ENCODE measurements at regions of chr5 and their contacts with region 1.

Region 1: DNA sequence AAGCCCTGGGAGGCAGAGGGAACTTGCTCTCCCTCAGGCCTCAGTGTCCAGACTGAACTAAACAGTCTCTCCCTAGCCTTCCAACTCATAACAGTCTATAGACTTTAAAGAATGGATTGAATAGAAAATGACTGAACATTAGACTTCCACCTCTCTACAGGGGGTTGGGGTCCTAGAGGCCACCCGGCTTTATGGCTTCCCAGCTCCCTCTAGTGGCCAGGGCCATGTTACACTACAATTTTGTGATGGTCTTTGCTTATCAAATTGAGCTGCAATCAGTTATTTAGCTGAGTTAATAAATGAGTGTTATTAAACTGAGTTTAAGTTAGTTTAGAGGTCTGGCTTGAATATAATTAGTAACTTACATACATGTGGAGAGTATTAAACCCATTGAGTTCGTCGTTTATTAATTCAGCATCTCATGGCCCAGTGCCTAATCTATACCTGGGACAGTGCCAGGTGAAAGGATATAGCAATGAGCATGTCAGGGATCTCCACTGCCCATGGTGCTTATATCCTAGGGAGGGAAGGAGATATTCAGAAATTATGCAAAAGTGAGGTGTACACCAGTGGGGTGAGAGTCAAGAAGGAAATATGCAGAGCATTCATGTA is 105.2 kb downstream of the SH3TC2 start:
- H3K4me3 ChIP-seq: no peak overlapping the region
- H3K27ac ChIP-seq: no peak overlapping the region
- H3K4me1 ChIP-seq: no peaks in the 10 kb centered on the region
- CTCF ChIP-seq: peak; percentile 64; the same call in 1 of the 2 replicates

Region 2: DNA sequence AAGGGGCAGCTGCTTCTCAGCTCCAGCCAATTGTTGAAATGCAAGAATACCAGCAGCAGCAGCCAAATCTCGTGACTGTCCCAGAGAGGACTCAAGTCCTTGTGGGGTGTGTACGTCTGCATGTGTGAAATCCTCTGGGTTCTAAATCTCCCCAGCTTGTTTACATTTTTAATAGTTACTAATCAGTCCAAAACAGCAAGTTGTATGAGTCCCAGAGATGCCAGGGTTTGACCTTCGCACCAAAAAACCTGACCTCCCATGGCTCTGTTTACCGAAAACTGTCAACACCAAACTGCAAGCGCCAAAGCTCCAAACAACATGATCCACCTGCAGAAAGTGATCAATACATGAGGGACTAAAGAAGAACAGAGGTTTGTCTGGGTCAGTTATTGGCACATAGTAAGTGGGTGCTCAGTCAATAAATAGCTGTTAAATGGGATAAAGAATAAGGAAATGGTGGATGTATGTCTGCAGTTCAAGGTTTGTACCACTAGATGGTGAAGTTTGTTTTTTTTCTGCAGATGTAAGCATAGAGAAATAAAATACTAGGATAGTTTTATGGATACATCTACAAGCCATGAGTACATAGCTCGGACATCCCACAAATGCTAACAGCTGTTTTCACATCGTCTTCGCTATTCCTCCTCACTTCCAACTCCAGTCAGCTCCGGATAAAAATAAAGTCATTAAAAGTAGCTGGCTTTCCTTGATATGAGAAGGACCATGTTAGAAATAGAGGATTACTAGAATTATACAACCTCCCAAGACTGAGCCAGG is 216.5 kb before region 1 on chr5:
- CTCF ChIA-PET with region 1: interaction called, 87 read pairs
- POLR2A ChIA-PET with region 1: interaction called, 3 read pairs
- H3K4me3 ChIP-seq: no peak overlapping the region
- H3K27ac ChIP-seq: no peak overlapping the region
- H3K4me1 ChIP-seq: no peaks in the 10 kb centered on the region
- CTCF ChIP-seq: peak; percentile 7; the same call in 1 of the 2 replicates

Region 3: GRCh38 chr5:148912714-148913398 is 44.8 kb before region 1 on chr5:
- CTCF ChIA-PET with region 1: interaction called, 27 read pairs
- POLR2A ChIA-PET with region 1: no interaction called
- H3K4me3 ChIP-seq: no peak overlapping the region
- H3K27ac ChIP-seq: no peak overlapping the region
- H3K4me1 ChIP-seq: no peaks in the 10 kb centered on the region
- CTCF ChIP-seq: peak; percentile 22; the same call in 1 of the 2 replicates

Region 4: GRCh38 chr5:148972958-148973357 is 15.3 kb after region 1 on chr5:
- CTCF ChIA-PET with region 1: interaction called, 19 read pairs
- POLR2A ChIA-PET with region 1: interaction called, 3 read pairs
- H3K4me3 ChIP-seq: no peak overlapping the region
- H3K27ac ChIP-seq: no peak overlapping the region
- H3K4me1 ChIP-seq: 0 out of 2 replicates have a peak, but pooled peaks cover 2% of the 10 kb centered on the region
- CTCF ChIP-seq: no peak

Region 5: DNA sequence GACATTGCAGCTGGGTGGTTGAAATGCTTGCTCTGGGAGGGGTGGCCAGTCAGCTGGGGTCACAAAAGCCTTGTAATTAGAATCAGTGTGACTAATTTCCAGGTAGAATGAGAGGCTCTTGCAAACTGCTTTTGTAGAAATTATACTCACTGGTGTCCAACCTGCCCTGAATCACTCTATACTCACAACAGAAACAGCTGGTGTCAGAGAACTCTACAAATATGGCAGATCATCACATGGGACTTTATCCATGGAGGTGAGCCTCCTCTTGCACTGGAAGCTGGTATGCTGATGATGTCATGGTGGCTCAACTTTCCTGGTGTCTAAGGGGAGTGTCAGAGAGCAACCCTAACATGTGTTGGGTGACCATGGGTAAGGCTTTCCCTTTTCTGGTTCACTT is 33.9 kb after region 1 on chr5:
- CTCF ChIA-PET with region 1: interaction called, 45 read pairs
- POLR2A ChIA-PET with region 1: no interaction called
- H3K4me3 ChIP-seq: no peak overlapping the region
- H3K27ac ChIP-seq: no peak overlapping the region
- H3K4me1 ChIP-seq: no peaks in the 10 kb centered on the region
- CTCF ChIP-seq: no peak

Region 6: DNA sequence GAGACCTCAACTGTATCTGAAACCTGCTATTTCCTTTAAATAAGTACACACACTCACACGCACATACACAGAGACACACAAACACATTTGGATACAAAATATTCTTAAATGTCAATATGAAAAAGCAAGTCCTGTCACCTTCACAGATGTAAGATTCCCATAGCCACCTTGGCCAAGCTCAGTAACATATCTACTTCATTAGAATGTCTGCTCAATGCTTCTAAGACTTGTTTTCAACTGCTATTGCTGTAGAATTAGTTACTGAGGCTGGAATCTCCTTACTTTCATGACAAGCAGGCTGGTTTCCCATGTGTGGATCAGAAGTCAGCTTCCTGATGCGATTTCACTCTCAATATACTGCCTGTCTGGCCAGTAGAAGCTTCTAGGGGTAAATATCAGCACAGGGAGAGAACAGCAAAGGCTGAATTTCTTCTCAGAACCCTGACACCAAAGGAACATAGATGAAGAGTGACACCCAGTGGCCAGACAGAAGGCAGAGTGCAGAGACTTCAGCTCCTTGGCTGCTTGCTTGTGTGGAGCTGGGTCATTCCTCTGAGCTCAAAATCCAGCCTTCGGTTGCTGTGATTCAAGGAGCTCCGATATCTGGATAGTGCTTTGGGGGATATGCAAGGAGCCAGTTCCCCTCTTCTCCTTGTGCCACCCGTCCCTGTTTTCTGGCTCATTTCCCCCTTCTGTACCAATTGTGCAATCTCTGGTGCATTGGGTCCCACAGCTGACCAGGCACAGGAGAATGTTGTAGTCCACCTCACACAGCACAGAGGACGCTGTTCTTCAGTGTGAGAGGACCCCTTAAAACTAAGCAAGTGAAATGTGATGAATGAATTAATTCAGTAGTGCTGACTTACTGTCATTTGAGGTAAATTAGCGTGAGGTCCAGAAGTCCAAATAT is 157.0 kb after region 1 on chr5:
- CTCF ChIA-PET with region 1: interaction called, 10 read pairs
- POLR2A ChIA-PET with region 1: interaction called, 3 read pairs
- H3K4me3 ChIP-seq: no peak overlapping the region
- H3K27ac ChIP-seq: no peak overlapping the region
- H3K4me1 ChIP-seq: peaks cover 5% of the 10 kb centered on the region
- CTCF ChIP-seq: peak; percentile 74; the same call in 1 of the 2 replicates

Measured in HEK293 (cell line).